PC-3 (cell line): ENCODE measurements at regions of chr7 and their contacts with region 1.

Region 1: GRCh38 chr7:36291387-36292316 is 98.0 kb upstream of the ANLN start:
- DNase-seq: peak; percentile 89
- ATAC-seq: peak; percentile 52
- H3K4me3 ChIP-seq: peak overlapping the region; percentile 40; the same call in 1 of the 2 replicates
- H3K27ac ChIP-seq: peak overlapping the region; percentile 92
- H3K4me1 ChIP-seq: peaks cover 55% of the 10 kb centered on the region
- H3K27me3 ChIP-seq: no peaks in the 10 kb centered on the region
- CTCF ChIP-seq: peak; percentile 94

Region 2: GRCh38 chr7:35985126-35985754 is 306.4 kb before region 1 on chr7:
- CTCF ChIA-PET with region 1: interaction called, 3 read pairs
- POLR2A ChIA-PET with region 1: no interaction called
- intact Hi-C with region 1: loop called (anchors 1 kb)
- DNase-seq: peak; percentile 83
- ATAC-seq: peak; percentile 96
- H3K4me3 ChIP-seq: no peak overlapping the region
- H3K27ac ChIP-seq: no peak overlapping the region
- H3K4me1 ChIP-seq: peaks cover 29% of the 10 kb centered on the region
- H3K27me3 ChIP-seq: no peaks in the 10 kb centered on the region
- CTCF ChIP-seq: peak; percentile 91

Region 3: GRCh38 chr7:36037121-36037662 is 254.5 kb before region 1 on chr7:
- CTCF ChIA-PET with region 1: no interaction called
- POLR2A ChIA-PET with region 1: interaction called, 4 read pairs
- intact Hi-C with region 1: loop called (anchors 1 kb)
- DNase-seq: peak; percentile 99
- ATAC-seq: peak; percentile 68
- H3K4me3 ChIP-seq: peak overlapping the region; percentile 39
- H3K27ac ChIP-seq: peak overlapping the region; percentile 100
- H3K4me1 ChIP-seq: peaks cover 69% of the 10 kb centered on the region
- H3K27me3 ChIP-seq: no peaks in the 10 kb centered on the region
- CTCF ChIP-seq: no peak

Region 4: DNA sequence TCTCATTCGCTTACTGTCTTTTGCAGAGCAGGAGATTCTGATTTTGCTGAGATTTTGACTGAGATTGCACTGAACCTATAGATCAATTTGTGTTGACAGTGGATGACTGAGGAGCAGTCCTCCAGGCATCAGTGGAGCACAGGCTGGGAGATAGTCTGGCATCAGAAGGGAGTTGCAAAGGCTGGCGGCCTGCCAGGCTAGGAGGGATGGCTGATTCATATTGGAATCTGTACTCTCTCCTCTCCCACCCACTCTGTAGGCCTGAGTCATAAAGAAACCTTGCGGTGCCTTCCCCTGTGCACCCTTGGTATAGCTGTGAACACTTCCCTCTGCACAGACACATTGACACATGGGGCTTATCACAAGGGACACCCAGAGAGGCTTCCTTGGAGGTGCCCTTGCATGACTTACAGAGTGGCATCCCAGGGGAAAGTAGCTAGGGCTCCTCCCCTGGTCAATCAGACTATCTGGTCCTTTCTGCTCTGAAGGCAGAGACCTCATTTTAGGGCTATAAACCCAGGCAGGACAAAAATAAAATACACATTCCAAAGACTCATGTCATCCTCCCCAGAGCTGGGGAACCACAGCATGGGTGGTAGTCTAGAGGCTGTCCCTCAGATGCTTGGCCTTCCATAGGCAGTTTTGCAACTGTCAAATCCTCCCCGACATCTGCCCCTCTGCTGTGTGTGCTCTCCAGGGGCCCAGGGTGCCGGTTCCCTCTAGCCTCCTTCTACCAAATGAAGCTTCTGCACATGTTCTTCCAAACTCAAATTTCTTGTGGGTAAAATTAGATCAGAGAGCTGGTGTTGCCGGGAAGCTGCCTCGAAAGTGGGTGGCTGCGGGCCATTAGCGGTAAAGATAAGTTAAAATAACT is 176.0 kb before region 1 on chr7:
- CTCF ChIA-PET with region 1: no interaction called
- POLR2A ChIA-PET with region 1: interaction called, 5 read pairs
- intact Hi-C with region 1: loop called (anchors 1 kb)
- DNase-seq: peak; percentile 97
- ATAC-seq: peak; percentile 89
- H3K4me3 ChIP-seq: peak overlapping the region; percentile 17; the same call in 1 of the 2 replicates
- H3K27ac ChIP-seq: peak overlapping the region; percentile 95
- H3K4me1 ChIP-seq: peaks cover 51% of the 10 kb centered on the region
- H3K27me3 ChIP-seq: no peaks in the 10 kb centered on the region
- CTCF ChIP-seq: no peak

Region 5: GRCh38 chr7:36152756-36153570 is 138.7 kb before region 1 on chr7 and contains the start of gene EEPD1:
- CTCF ChIA-PET with region 1: interaction called, 5 read pairs
- POLR2A ChIA-PET with region 1: interaction called, 7 read pairs
- intact Hi-C with region 1: loop called (anchors 1 kb)
- DNase-seq: peak; percentile 98
- ATAC-seq: peak; percentile 82
- H3K4me3 ChIP-seq: peak within 1 kb of the TSS; percentile 84
- H3K27ac ChIP-seq: peak within 1 kb of the TSS; percentile 43
- H3K4me1 ChIP-seq: peaks cover 35% of the 10 kb centered on the region
- H3K27me3 ChIP-seq: no peaks in the 10 kb centered on the region
- CTCF ChIP-seq: no peak
- total RNA-seq, gene EEPD1: 28.3 and 31.8 TPM in 2 replicates

Region 6: DNA sequence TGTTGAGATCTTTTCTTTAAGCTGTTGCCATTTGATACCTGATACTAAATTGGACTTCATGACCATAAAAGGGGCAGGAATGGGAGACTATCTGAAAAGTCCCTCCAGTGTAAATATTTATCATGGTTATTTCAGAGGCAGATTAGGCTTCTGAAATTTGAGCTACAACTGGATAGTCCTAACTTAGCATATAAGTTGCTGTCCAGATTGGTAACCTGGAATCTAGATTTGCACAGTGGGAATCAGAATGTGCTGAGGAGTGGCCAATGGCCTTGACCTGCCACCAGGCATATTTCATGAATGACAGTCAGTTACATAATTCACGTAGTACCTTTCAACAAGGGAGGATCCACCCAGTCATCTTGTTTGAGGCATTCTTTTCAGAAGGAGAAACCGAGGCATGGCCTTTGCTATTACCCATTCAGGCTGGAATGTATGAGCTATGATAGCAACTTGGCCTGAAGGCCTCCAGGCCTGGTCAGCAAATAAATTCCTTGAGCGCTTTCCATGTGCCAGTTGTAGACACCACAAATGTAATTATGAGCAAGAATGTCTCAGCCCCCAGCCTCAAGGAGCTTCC is 58.6 kb before region 1 on chr7:
- CTCF ChIA-PET with region 1: no interaction called
- POLR2A ChIA-PET with region 1: no interaction called
- intact Hi-C with region 1: loop called (anchors 2 kb)
- DNase-seq: peak; percentile 36
- ATAC-seq: peak; percentile 84
- H3K4me3 ChIP-seq: no peak overlapping the region
- H3K27ac ChIP-seq: no peak overlapping the region
- H3K4me1 ChIP-seq: peaks cover 13% of the 10 kb centered on the region
- H3K27me3 ChIP-seq: no peaks in the 10 kb centered on the region
- CTCF ChIP-seq: no peak

Region 7: DNA sequence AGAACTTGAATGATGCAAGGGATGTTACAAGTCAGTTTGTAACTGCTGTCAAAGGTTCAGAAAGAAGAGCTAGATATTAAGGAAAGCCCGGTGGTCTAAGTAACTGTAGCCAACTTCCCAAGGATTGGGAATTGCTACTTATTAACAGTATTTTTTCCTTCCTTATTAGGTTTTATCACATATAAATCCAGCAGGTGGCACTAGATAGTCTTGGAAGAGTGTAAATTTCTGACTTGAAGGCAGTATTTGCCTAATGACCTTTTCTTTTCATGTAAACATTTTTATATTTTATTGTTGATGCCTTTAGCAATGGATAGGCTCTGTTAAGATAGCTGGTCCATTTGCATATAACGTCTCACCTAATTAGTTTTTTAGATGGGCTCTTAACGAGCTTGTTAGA is 149.2 kb after region 1 on chr7:
- CTCF ChIA-PET with region 1: no interaction called
- POLR2A ChIA-PET with region 1: no interaction called
- intact Hi-C with region 1: no loop called
- DNase-seq: peak; percentile 38
- ATAC-seq: peak; percentile 55
- H3K4me3 ChIP-seq: no peak overlapping the region
- H3K27ac ChIP-seq: no peak overlapping the region
- H3K4me1 ChIP-seq: no peaks in the 10 kb centered on the region
- H3K27me3 ChIP-seq: no peaks in the 10 kb centered on the region
- CTCF ChIP-seq: peak; percentile 61

Region 8: GRCh38 chr7:36633377-36633776 is 341.7 kb after region 1 on chr7:
- CTCF ChIA-PET with region 1: no interaction called
- POLR2A ChIA-PET with region 1: no interaction called
- intact Hi-C with region 1: no loop called
- DNase-seq: no peak
- ATAC-seq: no peak
- H3K4me3 ChIP-seq: no peak overlapping the region
- H3K27ac ChIP-seq: no peak overlapping the region
- H3K4me1 ChIP-seq: no peaks in the 10 kb centered on the region
- H3K27me3 ChIP-seq: peaks cover 25% of the 10 kb centered on the region
- CTCF ChIP-seq: no peak